Activated naive CD4-positive, alpha-beta T cell treated with anti-CD3 and anti-CD28 coated beads, Interleukin-2, amount 10 ng/mL, durations not matched to agents 7 days and 5 days (primary cell): ENCODE measurements at regions of chr16 and their contacts with region 1.

Region 1: GRCh38 chr16:87571136-87571867 is 31.0 kb upstream of the JPH3 start:
- DNase-seq: peak; percentile 34
- H3K4me3 Mint-ChIP-seq: no peak overlapping the region
- H3K27ac Mint-ChIP-seq: no peak overlapping the region
- H3K4me1 Mint-ChIP-seq: no peaks in the 10 kb centered on the region
- H3K27me3 Mint-ChIP-seq: peaks cover 18% of the 10 kb centered on the region

Region 2: GRCh38 chr16:87416826-87417527 is 154.3 kb before region 1 on chr16:
- CTCF ChIA-PET with region 1: interaction called, 12 read pairs
- DNase-seq: peak; percentile 60
- H3K4me3 Mint-ChIP-seq: no peak overlapping the region
- H3K27ac Mint-ChIP-seq: no peak overlapping the region
- H3K4me1 Mint-ChIP-seq: no peaks in the 10 kb centered on the region
- H3K27me3 Mint-ChIP-seq: no peaks in the 10 kb centered on the region

Region 3: GRCh38 chr16:87661561-87661960 is 90.3 kb after region 1 on chr16:
- CTCF ChIA-PET with region 1: no interaction called
- DNase-seq: peak; percentile 56
- H3K4me3 Mint-ChIP-seq: no peak overlapping the region
- H3K27ac Mint-ChIP-seq: no peak overlapping the region
- H3K4me1 Mint-ChIP-seq: no peaks in the 10 kb centered on the region
- H3K27me3 Mint-ChIP-seq: peaks cover 14% of the 10 kb centered on the region